H1 (cell line): ENCODE measurements at regions of chr2 and their contacts with region 1.

Region 1: DNA sequence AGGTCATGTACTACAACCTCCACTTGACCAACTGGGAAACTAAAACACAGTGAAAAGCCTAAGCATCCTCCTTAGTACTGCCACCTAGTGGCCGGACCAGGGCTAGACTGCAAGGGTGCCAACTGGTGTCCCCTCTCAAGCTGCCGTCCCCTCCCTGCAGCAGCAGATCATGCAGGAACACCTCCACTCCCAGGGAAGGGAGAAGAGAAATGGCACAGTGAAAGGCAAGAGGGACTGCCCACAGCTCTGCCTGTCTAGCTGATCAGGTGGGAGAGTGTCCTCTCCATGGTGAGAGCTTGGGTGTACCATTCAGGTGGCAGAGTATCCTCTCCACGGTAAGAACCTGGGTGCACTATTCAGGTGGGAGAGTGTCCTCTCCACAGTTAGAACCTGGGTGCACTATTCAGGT is 78.1 kb downstream of the AAK1 start:
- DNase-seq: peak; percentile 39 to 94
- H3K4me3 ChIP-seq: no peak overlapping the region
- H3K27ac ChIP-seq: no peak overlapping the region
- H3K4me1 ChIP-seq: no peaks in the 10 kb centered on the region
- H3K27me3 ChIP-seq: no peaks in the 10 kb centered on the region
- CTCF ChIP-seq: peak; percentile 84 to 98 (median 94)
- EP300 ChIP-seq: no peak
- POLR2A ChIP-seq: no peak
- RAD21 ChIP-seq: peak; percentile 54 to 68

Region 2: GRCh38 chr2:69375494-69376353 is 189.7 kb before region 1 on chr2:
- CTCF ChIA-PET with region 1: interaction called, 24 read pairs
- POLR2A ChIA-PET with region 1: no interaction called
- DNase-seq: no peak
- H3K4me3 ChIP-seq: no peak overlapping the region
- H3K27ac ChIP-seq: no peak overlapping the region
- H3K4me1 ChIP-seq: no peaks in the 10 kb centered on the region
- H3K27me3 ChIP-seq: no peaks in the 10 kb centered on the region
- CTCF ChIP-seq: peak in 2 of 3 experiments; percentile 57 to 66; a peak in 3 of 4 replicates
- EP300 ChIP-seq: no peak
- POLR2A ChIP-seq: no peak
- RAD21 ChIP-seq: peak; percentile 69 to 73

Region 3: GRCh38 chr2:69589973-69590652 is 24.7 kb after region 1 on chr2:
- CTCF ChIA-PET with region 1: interaction called, 45 read pairs
- POLR2A ChIA-PET with region 1: no interaction called
- DNase-seq: no peak
- H3K4me3 ChIP-seq: no peak overlapping the region
- H3K27ac ChIP-seq: peak overlapping the region; percentile 16; the same call in 1 of the 2 replicates
- H3K4me1 ChIP-seq: peaks cover 2 to 5% (median 3%) of the 10 kb centered on the region in 4 experiments; a peak in 5 of 7 replicates
- H3K27me3 ChIP-seq: no peaks in the 10 kb centered on the region
- CTCF ChIP-seq: no peak
- EP300 ChIP-seq: no peak
- POLR2A ChIP-seq: no peak
- RAD21 ChIP-seq: no peak

Region 4: DNA sequence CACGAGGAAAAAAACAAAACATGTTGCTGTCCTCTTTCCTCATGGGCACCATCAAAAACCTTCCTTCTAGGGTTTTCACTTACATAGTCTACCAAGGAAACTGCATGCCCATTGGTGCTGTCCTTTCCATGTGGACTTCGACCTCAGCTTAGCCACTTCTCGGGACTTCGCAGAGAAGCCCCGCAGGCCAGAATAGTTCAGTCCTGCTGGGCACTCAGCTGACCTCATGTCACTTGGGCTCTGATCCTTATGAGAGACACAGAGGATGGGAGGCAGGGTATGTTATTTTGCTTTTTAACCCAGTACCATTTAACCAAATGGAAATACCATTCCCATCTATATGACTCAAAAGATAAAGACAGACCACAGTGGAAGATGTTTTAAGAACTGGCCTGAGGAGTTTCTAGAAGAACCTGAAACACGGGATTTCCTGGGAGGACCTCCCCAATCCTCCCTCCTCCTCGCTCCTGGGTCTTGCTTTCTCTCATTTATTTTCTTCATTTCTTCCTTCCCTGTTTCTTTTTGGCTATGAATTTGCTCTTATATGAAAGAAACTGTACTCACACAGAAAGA is 49.7 kb after region 1 on chr2:
- CTCF ChIA-PET with region 1: interaction called, 11 read pairs
- POLR2A ChIA-PET with region 1: no interaction called
- DNase-seq: no peak
- H3K4me3 ChIP-seq: no peak overlapping the region
- H3K27ac ChIP-seq: no peak overlapping the region
- H3K4me1 ChIP-seq: peaks cover 0 to 2% (median 0%) of the 10 kb centered on the region in 4 experiments; a peak in 1 of 7 replicates
- H3K27me3 ChIP-seq: no peaks in the 10 kb centered on the region
- CTCF ChIP-seq: no peak
- EP300 ChIP-seq: no peak
- POLR2A ChIP-seq: no peak
- RAD21 ChIP-seq: no peak

Region 5: DNA sequence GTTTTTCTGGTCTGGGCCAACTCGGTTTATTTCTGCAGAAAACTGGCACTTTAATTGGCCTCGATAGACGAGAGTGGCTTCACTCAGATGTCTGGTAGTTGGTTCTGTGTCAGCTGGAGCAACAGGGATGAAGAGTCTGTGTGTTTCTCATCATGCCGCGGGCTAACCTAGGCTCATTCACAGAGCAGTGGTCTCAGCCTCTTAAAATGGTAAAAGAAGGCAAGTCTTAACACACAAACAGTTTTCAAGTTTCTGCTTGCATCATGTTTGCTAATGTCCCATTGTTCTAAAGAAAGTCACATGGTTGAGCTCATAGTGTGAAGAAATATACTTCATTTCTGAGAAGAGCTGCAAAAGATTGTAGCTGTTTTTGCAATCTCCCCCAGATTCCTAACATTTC is 139.0 kb after region 1 on chr2:
- CTCF ChIA-PET with region 1: interaction called, 19 read pairs
- POLR2A ChIA-PET with region 1: no interaction called
- DNase-seq: no peak
- H3K4me3 ChIP-seq: no peak overlapping the region
- H3K27ac ChIP-seq: no peak overlapping the region
- H3K4me1 ChIP-seq: no peaks in the 10 kb centered on the region; a peak in 2 of 7 replicates
- H3K27me3 ChIP-seq: no peaks in the 10 kb centered on the region
- CTCF ChIP-seq: no peak
- EP300 ChIP-seq: no peak
- POLR2A ChIP-seq: no peak
- RAD21 ChIP-seq: no peak

Region 6: DNA sequence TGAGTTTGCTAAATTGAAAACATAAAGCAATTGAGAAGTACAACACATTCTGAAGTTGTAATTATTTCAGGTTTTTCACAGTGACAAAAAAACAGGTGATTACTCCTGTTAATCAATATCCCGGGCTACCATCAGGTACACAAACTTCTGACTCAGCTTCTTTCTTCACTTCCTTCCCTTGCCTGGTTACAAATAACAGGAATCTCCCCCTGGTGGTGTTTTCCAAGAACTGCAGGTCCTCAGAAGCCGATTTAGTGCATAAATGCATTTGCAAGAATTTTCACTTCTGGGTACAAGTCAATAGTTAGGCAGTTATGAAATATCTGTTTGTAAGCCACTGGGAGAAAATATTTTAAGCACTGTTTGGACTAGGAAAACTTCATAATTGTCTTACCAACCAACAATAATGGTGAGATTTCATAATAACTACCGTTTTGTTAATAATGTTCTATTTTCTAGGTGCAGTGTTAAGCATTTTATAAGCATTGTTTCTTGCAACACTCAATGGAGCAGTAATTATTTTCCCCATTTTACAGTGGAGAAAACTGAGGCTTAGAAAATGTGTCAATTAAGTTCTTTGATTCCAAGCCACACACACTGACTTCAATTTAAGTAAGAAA is 251.6 kb after region 1 on chr2:
- CTCF ChIA-PET with region 1: interaction called, 15 read pairs
- POLR2A ChIA-PET with region 1: no interaction called
- DNase-seq: peak; percentile 60 to 68
- H3K4me3 ChIP-seq: no peak overlapping the region
- H3K27ac ChIP-seq: no peak overlapping the region
- H3K4me1 ChIP-seq: peaks cover 0 to 9% (median 0%) of the 10 kb centered on the region in 4 experiments; a peak in 3 of 7 replicates
- H3K27me3 ChIP-seq: no peaks in the 10 kb centered on the region
- CTCF ChIP-seq: peak in 2 of 3 experiments; percentile 79 to 82; a peak in 3 of 4 replicates
- EP300 ChIP-seq: no peak
- POLR2A ChIP-seq: no peak
- RAD21 ChIP-seq: peak; percentile 73 to 86